WTC11 (cell line): ENCODE measurements at regions of chr5 and their contacts with region 1.

Region 1: DNA sequence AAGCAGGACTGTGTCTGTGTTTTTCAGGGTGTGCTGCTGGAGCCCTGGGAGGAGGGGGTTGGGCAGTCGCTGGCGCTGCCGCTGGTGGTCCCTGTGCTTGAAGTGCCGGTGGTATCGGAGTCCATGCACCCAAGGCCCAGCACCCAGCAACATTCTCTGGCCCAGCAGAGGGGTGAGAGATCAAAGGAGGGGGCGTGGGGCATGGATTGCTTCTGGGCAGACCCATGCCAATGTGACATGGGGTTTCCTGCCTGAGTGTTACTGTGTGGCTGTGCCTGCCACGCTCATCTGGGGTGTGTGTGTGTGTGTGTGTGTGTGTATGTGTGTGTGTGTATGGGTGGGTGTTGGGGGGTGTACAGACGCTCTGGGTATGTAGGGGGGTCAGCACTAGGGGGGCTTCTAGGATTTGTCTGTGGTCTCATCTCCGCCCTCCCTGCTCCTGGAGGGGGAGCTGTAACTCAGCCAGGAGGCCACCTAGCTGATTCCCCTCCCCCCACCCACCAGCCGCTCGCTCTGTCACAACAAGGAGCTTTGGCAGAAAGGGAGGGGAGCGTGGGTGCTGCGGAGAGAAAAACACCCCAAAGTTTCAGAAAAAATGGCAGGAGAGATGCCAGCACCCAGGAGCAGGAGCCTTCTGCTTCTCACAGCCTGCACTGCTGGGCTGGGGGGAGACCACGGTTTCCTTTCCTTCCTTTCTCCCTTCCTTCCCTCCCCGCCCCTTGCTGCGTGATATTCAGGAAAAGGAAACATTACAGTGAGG is 35.9 kb upstream of the HSPA9 start:
- DNase-seq: peak; percentile 66
- ATAC-seq: peak; percentile 57
- H3K4me3 Mint-ChIP-seq: peak overlapping the region; percentile 52
- H3K27ac Mint-ChIP-seq: peak overlapping the region; percentile 39
- H3K4me1 Mint-ChIP-seq: peaks cover 24% of the 10 kb centered on the region
- H3K27me3 Mint-ChIP-seq: no peaks in the 10 kb centered on the region
- CTCF ChIP-seq: no peak

Region 2: GRCh38 chr5:138575194-138576015 is 35.7 kb before region 1 on chr5 and contains the start of gene HSPA9:
- CTCF ChIA-PET with region 1: interaction called, 20 read pairs
- POLR2A ChIA-PET with region 1: interaction called, 10 read pairs
- DNase-seq: peak; percentile 91
- ATAC-seq: peak; percentile 83
- H3K4me3 Mint-ChIP-seq: peak within 1 kb of the TSS; percentile 97
- H3K27ac Mint-ChIP-seq: peak within 1 kb of the TSS; percentile 100
- H3K4me1 Mint-ChIP-seq: peaks cover 10% of the 10 kb centered on the region
- H3K27me3 Mint-ChIP-seq: no peaks in the 10 kb centered on the region; the same call in 1 of the 2 replicates
- CTCF ChIP-seq: no peak
- total RNA-seq, gene HSPA9: 313 to 414 TPM (median 328 TPM) in 3 replicates

Region 3: GRCh38 chr5:138595180-138595795 is 15.8 kb before region 1 on chr5:
- CTCF ChIA-PET with region 1: interaction called, 13 read pairs
- POLR2A ChIA-PET with region 1: no interaction called
- DNase-seq: no peak
- ATAC-seq: peak; percentile 75
- H3K4me3 Mint-ChIP-seq: no peak overlapping the region
- H3K27ac Mint-ChIP-seq: no peak overlapping the region
- H3K4me1 Mint-ChIP-seq: 0 out of 2 replicates have a peak, but pooled peaks cover 4% of the 10 kb centered on the region
- H3K27me3 Mint-ChIP-seq: no peaks in the 10 kb centered on the region; the same call in 1 of the 2 replicates
- CTCF ChIP-seq: no peak

Region 4: GRCh38 chr5:138623053-138623452 is 12.0 kb after region 1 on chr5:
- CTCF ChIA-PET with region 1: interaction called, 13 read pairs
- POLR2A ChIA-PET with region 1: no interaction called
- DNase-seq: no peak
- ATAC-seq: no peak
- H3K4me3 Mint-ChIP-seq: no peak overlapping the region
- H3K27ac Mint-ChIP-seq: no peak overlapping the region
- H3K4me1 Mint-ChIP-seq: peaks cover 10% of the 10 kb centered on the region
- H3K27me3 Mint-ChIP-seq: peaks cover 2% of the 10 kb centered on the region; the same call in 1 of the 2 replicates
- CTCF ChIP-seq: no peak

Region 5: GRCh38 chr5:138649316-138649720 is 38.2 kb after region 1 on chr5:
- CTCF ChIA-PET with region 1: interaction called, 11 read pairs
- POLR2A ChIA-PET with region 1: interaction called, 3 read pairs
- DNase-seq: no peak
- ATAC-seq: peak; percentile 53
- H3K4me3 Mint-ChIP-seq: no peak overlapping the region
- H3K27ac Mint-ChIP-seq: no peak overlapping the region
- H3K4me1 Mint-ChIP-seq: peaks cover 36% of the 10 kb centered on the region
- H3K27me3 Mint-ChIP-seq: no peaks in the 10 kb centered on the region
- CTCF ChIP-seq: no peak